ENCODE measurements at regions of chr10 and their contacts with region 1.

Region 1: GRCh38 chr10:69506834-69507721 is 55.8 kb downstream of the TSPAN15 start:
- DNase-seq: no peak
- ATAC-seq: peak; percentile 19 to 35
- H3K4me3 ChIP-seq: no peak overlapping the region
- H3K27ac ChIP-seq: peak overlapping the region; percentile 4
- H3K4me1 ChIP-seq: no peaks in the 10 kb centered on the region
- H3K27me3 ChIP-seq: no peaks in the 10 kb centered on the region
- CTCF ChIP-seq: no peak

Region 2: GRCh38 chr10:69425511-69426298 is 81.4 kb before region 1 on chr10:
- intact Hi-C with region 1: loop called (anchors 5 kb)
- DNase-seq: no peak
- ATAC-seq: peak; percentile 61 to 63
- H3K4me3 ChIP-seq: no peak overlapping the region
- H3K27ac ChIP-seq: peak overlapping the region; percentile 51
- H3K4me1 ChIP-seq: peaks cover 31% of the 10 kb centered on the region
- H3K27me3 ChIP-seq: no peaks in the 10 kb centered on the region
- CTCF ChIP-seq: no peak